Pancreas (tissue), 10 donors: ENCODE measurements at regions of chr22 and their contacts with region 1.

Region 1: GRCh38 chr22:28829358-28830181 is 29.2 kb upstream of the XBP1 start:
- DNase-seq: peak; percentile 71 to 88 (median 82)
- ATAC-seq: peak; percentile 90 to 97 (median 95)
- H3K4me3 ChIP-seq: no peak overlapping the region
- H3K27ac ChIP-seq: peak overlapping the region; percentile 20 to 62 (median 36)
- H3K4me1 ChIP-seq: peaks cover 2 to 13% (median 9%) of the 10 kb centered on the region in 3 donors
- H3K27me3 ChIP-seq: no peaks in the 10 kb centered on the region
- CTCF ChIP-seq: peak; percentile 87 to 99 (median 97)

Region 2: GRCh38 chr22:28600546-28601143 is 228.9 kb before region 1 on chr22:
- intact Hi-C with region 1: loop called in 2 of 3 experiments (anchors 10 kb)
- DNase-seq: no peak
- ATAC-seq: peak; percentile 74 to 84 (median 82)
- H3K4me3 ChIP-seq: no peak overlapping the region
- H3K27ac ChIP-seq: no peak overlapping the region
- H3K4me1 ChIP-seq: no peaks in the 10 kb centered on the region
- H3K27me3 ChIP-seq: no peaks in the 10 kb centered on the region
- CTCF ChIP-seq: peak in 2 of 4 donors; percentile 25 to 29

Region 3: GRCh38 chr22:28658448-28658847 is 171.1 kb before region 1 on chr22:
- intact Hi-C with region 1: no loop called
- DNase-seq: no peak
- ATAC-seq: peak in 2 of 4 donors; percentile 35 to 44
- H3K4me3 ChIP-seq: no peak overlapping the region
- H3K27ac ChIP-seq: no peak overlapping the region
- H3K4me1 ChIP-seq: peaks cover 0 to 22% (median 15%) of the 10 kb centered on the region in 3 donors
- H3K27me3 ChIP-seq: no peaks in the 10 kb centered on the region
- CTCF ChIP-seq: no peak